ENCODE measurements at regions of chr7 and their contacts with region 1.

Region 1: DNA sequence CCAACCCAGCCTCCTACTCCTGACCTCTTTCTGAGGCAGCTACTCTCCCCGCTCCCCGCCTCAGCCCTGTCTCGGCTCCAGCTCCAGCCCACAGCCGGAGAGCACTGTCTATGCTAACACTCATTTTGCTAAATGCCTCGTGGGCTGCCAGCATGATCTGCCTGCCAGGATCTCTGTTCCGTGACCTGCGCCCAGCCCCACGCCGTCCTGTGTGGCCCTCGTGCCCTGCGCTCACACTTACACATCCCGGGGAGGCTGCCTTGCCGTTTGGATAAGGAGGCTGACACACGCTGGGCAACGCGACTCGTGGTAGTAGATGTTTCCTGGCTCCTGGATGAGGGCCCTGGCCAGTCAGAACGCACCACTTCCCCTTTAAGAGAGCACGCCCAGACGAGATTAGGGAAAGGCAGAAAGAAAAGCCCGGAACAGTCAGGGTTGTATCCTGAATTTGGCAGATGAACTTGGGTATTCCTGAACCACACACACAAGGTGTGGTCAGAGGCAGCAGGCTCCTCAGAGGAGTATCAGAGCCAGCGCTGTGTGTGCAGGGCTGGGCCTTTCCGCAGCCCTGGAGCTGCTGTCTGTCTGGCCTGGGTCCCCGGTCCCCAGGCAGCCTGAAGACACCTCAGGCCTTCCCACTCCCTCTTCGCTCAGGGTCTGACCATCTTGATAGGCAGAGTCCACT is 97.7 kb upstream of the EFCAB10 start:
- DNase-seq: peak; percentile 56
- H3K4me3 Mint-ChIP-seq: peak overlapping the region; percentile 83
- H3K27ac Mint-ChIP-seq: peak overlapping the region; percentile 94
- H3K4me1 Mint-ChIP-seq: peaks cover 58% of the 10 kb centered on the region
- H3K27me3 Mint-ChIP-seq: no peaks in the 10 kb centered on the region

Region 2: GRCh38 chr7:105689067-105689964 is 10.4 kb after region 1 on chr7:
- CTCF ChIA-PET with region 1: interaction called, 10 read pairs
- DNase-seq: no peak
- H3K4me3 Mint-ChIP-seq: no peak overlapping the region
- H3K27ac Mint-ChIP-seq: peak overlapping the region; percentile 47
- H3K4me1 Mint-ChIP-seq: peaks cover 49% of the 10 kb centered on the region
- H3K27me3 Mint-ChIP-seq: peaks cover 3% of the 10 kb centered on the region